SK-N-SH (cell line): ENCODE measurements at regions of chr3 and their contacts with region 1.

Region 1: DNA sequence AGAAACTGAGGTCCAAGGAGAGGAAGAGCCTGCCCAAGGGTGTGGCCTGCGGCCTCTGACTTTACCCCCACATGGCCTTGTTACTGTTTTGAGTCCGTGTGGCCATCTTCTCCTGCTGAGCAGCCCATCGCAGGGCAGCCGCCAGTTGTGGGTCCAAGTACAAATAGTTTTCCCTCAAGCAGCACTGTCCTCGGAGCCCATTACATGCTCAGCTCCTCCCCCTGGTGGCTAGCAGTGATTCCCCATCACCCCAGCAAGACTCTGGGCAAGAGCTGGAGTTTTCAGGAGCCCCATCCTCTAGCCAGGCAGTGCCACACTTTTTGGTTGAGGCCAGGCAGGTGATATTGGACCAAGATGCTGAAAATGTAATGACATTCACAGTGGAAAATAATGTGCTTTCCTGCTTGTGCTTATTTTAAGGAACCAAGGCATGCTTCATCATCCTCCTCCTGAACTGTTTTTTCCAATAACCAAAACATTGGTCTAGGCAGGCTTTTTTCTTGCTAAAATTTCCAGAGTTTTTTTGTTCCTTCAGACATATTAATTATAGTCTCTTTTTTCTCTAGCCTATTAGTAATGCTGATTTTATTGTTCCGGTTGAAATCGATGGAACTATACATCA is 23.2 kb upstream of the VILL start:
- DNase-seq: peak; percentile 77
- H3K4me3 ChIP-seq: no peak overlapping the region
- H3K27ac ChIP-seq: no peak overlapping the region
- H3K4me1 ChIP-seq: peaks cover 7 to 8% of the 10 kb centered on the region in 2 experiments; a peak in 3 of 4 replicates
- H3K27me3 ChIP-seq: no peaks in the 10 kb centered on the region
- CTCF ChIP-seq: peak; percentile 84
- EP300 ChIP-seq: no peak
- RAD21 ChIP-seq: peak; percentile 86

Region 2: GRCh38 chr3:37862903-37863815 is 104.2 kb before region 1 on chr3:
- CTCF ChIA-PET with region 1: interaction called, 31 read pairs
- POLR2A ChIA-PET with region 1: no interaction called
- DNase-seq: no peak
- H3K4me3 ChIP-seq: peak overlapping the region; percentile 70 to 80
- H3K27ac ChIP-seq: peak overlapping the region; percentile 9 to 78; a peak in 3 of 4 replicates
- H3K4me1 ChIP-seq: peaks cover 15 to 39% of the 10 kb centered on the region in 2 experiments
- H3K27me3 ChIP-seq: no peaks in the 10 kb centered on the region
- CTCF ChIP-seq: no peak
- EP300 ChIP-seq: no peak
- RAD21 ChIP-seq: no peak

Region 3: DNA sequence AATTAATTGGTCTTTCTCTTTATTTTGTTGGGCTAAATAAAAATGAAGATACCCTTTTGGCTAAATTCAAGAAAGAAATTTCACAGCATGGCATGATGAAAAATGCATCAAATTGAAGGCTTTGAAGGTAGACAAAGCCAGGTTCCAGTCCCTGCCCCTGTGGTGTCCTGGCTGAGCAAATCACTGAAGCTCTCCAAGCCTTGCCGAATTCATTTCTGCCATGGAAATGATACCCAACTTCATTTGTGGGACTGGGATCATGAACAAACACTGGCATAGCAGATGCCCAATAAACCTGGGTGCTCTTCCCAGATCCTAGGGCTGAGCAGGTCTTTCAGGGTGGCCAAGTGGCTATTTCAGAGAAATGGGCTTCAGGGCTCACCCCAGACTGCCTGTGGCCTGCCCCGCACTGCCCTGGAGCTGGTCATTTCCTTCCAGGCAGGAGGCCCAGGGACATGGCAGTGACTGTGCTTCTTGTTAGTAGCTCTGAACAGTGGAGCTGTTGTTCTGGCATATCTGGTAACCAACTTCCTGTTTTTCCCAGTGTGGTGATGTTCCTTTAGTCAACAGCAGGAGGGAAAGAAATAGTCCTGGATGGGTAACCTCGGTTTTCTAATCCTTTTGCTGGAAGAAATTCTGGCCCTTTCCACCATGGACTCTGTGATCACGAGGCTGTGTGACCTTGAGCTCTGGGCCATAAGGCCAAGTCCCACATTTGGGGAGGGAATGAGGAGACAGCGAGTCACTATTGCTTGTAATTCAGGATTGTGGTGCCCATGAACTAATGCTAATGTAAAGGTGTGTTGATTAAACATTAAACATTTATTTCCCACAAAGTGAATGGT is 58.1 kb before region 1 on chr3:
- CTCF ChIA-PET with region 1: interaction called, 10 read pairs
- POLR2A ChIA-PET with region 1: no interaction called
- DNase-seq: no peak
- H3K4me3 ChIP-seq: no peak overlapping the region
- H3K27ac ChIP-seq: no peak overlapping the region; a peak in 1 of 4 replicates
- H3K4me1 ChIP-seq: peaks cover 26 to 35% of the 10 kb centered on the region in 2 experiments
- H3K27me3 ChIP-seq: no peaks in the 10 kb centered on the region
- CTCF ChIP-seq: no peak
- EP300 ChIP-seq: no peak
- RAD21 ChIP-seq: no peak

Region 4: GRCh38 chr3:37945807-37946530 is 21.4 kb before region 1 on chr3:
- CTCF ChIA-PET with region 1: interaction called, 14 read pairs
- POLR2A ChIA-PET with region 1: no interaction called
- DNase-seq: peak; percentile 89
- H3K4me3 ChIP-seq: no peak overlapping the region; a peak in 1 of 4 replicates
- H3K27ac ChIP-seq: peak overlapping the region; percentile 83 to 98
- H3K4me1 ChIP-seq: peaks cover 25 to 38% of the 10 kb centered on the region in 2 experiments
- H3K27me3 ChIP-seq: no peaks in the 10 kb centered on the region
- CTCF ChIP-seq: no peak
- EP300 ChIP-seq: peak; percentile 54 to 96; a peak in 3 of 4 replicates
- RAD21 ChIP-seq: peak; percentile 40

Region 5: GRCh38 chr3:37986479-37987314 is 19.3 kb after region 1 on chr3:
- CTCF ChIA-PET with region 1: interaction called, 33 read pairs
- POLR2A ChIA-PET with region 1: no interaction called
- DNase-seq: no peak
- H3K4me3 ChIP-seq: no peak overlapping the region
- H3K27ac ChIP-seq: no peak overlapping the region
- H3K4me1 ChIP-seq: no peaks in the 10 kb centered on the region; a peak in 1 of 4 replicates
- H3K27me3 ChIP-seq: no peaks in the 10 kb centered on the region
- CTCF ChIP-seq: no peak
- EP300 ChIP-seq: no peak
- RAD21 ChIP-seq: no peak

Region 6: DNA sequence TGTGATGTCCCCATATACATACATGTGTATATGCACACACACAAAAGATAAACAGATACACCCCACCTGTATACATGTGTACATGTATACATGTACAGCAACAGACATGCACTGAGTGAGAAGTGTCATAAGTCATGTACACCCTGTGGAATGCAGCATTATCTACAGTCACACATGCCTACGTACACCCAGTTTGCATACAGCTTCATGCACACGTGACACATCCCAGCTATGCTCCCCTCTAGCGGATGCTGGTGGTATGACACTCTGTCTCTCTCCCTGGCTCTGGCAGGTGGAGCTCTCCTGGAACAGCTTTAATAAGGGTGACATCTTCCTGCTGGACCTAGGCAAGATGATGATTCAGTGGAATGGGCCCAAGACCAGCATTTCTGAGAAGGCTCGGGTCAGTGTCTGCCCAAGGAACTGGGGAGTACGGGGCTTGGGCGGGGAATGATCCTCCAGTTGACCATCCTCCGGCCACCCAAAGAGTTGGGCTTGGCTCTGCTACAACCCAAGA is 29.5 kb after region 1 on chr3:
- CTCF ChIA-PET with region 1: interaction called, 17 read pairs
- POLR2A ChIA-PET with region 1: no interaction called
- DNase-seq: peak; percentile 82
- H3K4me3 ChIP-seq: no peak overlapping the region
- H3K27ac ChIP-seq: no peak overlapping the region
- H3K4me1 ChIP-seq: peaks cover 5 to 19% of the 10 kb centered on the region in 2 experiments; a peak in 3 of 4 replicates
- H3K27me3 ChIP-seq: no peaks in the 10 kb centered on the region
- CTCF ChIP-seq: peak; percentile 82
- EP300 ChIP-seq: no peak
- RAD21 ChIP-seq: peak; percentile 68